MCF 10A (cell line): ENCODE measurements at regions of chr20 and their contacts with region 1.

Region 1: DNA sequence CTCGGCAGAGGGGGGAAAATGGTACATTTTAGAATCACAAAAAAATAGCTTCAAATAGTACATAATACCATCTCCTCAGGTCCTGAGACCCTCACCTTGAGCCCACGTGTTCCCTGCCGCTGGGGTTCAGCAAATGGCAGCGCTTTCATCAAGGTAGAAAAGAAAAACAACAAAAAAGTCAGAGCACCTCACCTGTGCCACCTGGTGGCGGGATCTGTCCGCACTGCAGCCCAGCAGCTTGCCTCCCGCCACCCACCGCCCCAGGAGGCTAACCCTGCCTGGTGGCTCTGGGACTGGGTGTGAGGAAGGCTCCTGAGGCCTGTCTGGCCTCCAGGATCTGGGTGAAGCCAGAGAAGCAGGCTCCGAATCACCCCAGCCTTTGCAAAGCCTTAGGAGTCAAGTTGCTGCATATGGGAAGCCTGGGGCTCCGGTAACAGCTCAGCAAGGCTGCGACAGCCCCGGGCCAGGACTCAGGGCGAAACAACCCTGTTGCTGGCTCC is 270.8 kb downstream of the BMP7 start:
- DNase-seq: peak; percentile 34
- H3K4me3 Mint-ChIP-seq: no peak overlapping the region
- H3K27ac Mint-ChIP-seq: no peak overlapping the region
- H3K4me1 Mint-ChIP-seq: no peaks in the 10 kb centered on the region
- H3K27me3 Mint-ChIP-seq: no peaks in the 10 kb centered on the region
- CTCF ChIP-seq: peak; percentile 54

Region 2: GRCh38 chr20:56616716-56617115 is 378.9 kb before region 1 on chr20:
- CTCF ChIA-PET with region 1: no interaction called
- POLR2A ChIA-PET with region 1: no interaction called
- intact Hi-C with region 1: no loop called
- DNase-seq: no peak
- H3K4me3 Mint-ChIP-seq: no peak overlapping the region
- H3K27ac Mint-ChIP-seq: no peak overlapping the region
- H3K4me1 Mint-ChIP-seq: no peaks in the 10 kb centered on the region
- H3K27me3 Mint-ChIP-seq: no peaks in the 10 kb centered on the region
- CTCF ChIP-seq: no peak

Region 3: GRCh38 chr20:56875046-56875551 is 120.5 kb before region 1 on chr20:
- CTCF ChIA-PET with region 1: no interaction called
- POLR2A ChIA-PET with region 1: no interaction called
- intact Hi-C with region 1: no loop called
- DNase-seq: peak; percentile 93
- H3K4me3 Mint-ChIP-seq: no peak overlapping the region
- H3K27ac Mint-ChIP-seq: peak overlapping the region; percentile 72
- H3K4me1 Mint-ChIP-seq: peaks cover 7% of the 10 kb centered on the region
- H3K27me3 Mint-ChIP-seq: no peaks in the 10 kb centered on the region
- CTCF ChIP-seq: no peak

Region 4: DNA sequence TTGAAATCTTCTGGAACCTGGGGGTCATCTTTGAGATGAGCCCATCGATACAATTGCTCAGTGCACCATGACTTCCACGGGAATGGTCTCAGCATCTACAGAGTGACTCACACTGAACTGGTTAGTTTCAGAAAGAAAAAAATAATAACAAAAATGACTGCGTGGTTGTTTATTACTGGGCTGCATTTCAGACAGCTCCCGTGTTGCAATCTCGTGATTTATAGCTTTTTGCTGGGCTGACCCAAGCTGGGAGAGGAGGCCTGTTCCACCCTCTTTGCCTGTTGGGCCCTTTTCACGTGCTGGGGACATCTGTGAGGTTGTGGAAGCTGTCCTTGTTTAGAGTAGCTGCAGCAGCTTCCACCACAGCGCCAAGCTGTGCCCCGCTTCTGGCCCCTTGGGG is 45.3 kb after region 1 on chr20:
- CTCF ChIA-PET with region 1: interaction called, 10 read pairs
- POLR2A ChIA-PET with region 1: interaction called, 5 read pairs
- intact Hi-C with region 1: no loop called
- DNase-seq: peak; percentile 74
- H3K4me3 Mint-ChIP-seq: no peak overlapping the region
- H3K27ac Mint-ChIP-seq: no peak overlapping the region
- H3K4me1 Mint-ChIP-seq: peaks cover 10% of the 10 kb centered on the region
- H3K27me3 Mint-ChIP-seq: peaks cover 15% of the 10 kb centered on the region
- CTCF ChIP-seq: no peak